Esophagus squamous epithelium (tissue), 5 donors: ENCODE measurements at regions of chr20 and their contacts with region 1.

Region 1: GRCh38 chr20:31951530-31952453 is at the start of gene PDRG1:
- DNase-seq: peak; percentile 80
- H3K4me3 ChIP-seq: peak within 1 kb of the TSS; percentile 75 to 98 (median 92)
- H3K27ac ChIP-seq: peak within 1 kb of the TSS; percentile 81 to 89 (median 84)
- H3K4me1 ChIP-seq: peaks cover 12 to 24% (median 13%) of the 10 kb centered on the region in 3 donors
- H3K27me3 ChIP-seq: peaks cover 0 to 18% (median 0%) of the 10 kb centered on the region in 4 donors
- CTCF ChIP-seq: peak; percentile 90 to 100 (median 96)
- POLR2A ChIP-seq: peak in 3 of 4 donors; percentile 48 to 63 (median 62)
- total RNA-seq, gene PDRG1: 6.6 to 14.8 (median 11.1) TPM

Region 2: DNA sequence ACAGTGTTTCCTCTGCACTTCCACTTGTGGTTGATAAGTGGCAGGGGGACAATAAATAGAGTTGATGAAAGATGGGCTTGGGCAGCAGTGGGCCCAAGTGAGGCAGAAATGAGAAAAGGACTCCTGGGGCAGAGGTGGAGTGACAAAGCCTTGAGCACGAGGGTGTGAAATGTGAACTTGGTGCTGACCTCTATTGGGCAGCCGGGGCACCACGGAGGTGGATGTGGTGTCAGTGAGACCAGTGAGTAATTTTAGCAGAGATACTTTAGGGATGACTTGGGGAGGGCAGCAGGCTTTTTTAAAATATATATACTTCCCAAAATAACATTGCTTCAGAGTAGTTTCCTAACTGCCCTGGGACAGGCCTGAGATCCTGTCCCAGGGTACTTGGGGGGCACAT is 163.2 kb before region 1 on chr20:
- intact Hi-C with region 1: no loop called
- DNase-seq: no peak
- H3K4me3 ChIP-seq: no peak overlapping the region
- H3K27ac ChIP-seq: no peak overlapping the region
- H3K4me1 ChIP-seq: no peaks in the 10 kb centered on the region
- H3K27me3 ChIP-seq: no peaks in the 10 kb centered on the region
- CTCF ChIP-seq: no peak
- POLR2A ChIP-seq: no peak

Region 3: DNA sequence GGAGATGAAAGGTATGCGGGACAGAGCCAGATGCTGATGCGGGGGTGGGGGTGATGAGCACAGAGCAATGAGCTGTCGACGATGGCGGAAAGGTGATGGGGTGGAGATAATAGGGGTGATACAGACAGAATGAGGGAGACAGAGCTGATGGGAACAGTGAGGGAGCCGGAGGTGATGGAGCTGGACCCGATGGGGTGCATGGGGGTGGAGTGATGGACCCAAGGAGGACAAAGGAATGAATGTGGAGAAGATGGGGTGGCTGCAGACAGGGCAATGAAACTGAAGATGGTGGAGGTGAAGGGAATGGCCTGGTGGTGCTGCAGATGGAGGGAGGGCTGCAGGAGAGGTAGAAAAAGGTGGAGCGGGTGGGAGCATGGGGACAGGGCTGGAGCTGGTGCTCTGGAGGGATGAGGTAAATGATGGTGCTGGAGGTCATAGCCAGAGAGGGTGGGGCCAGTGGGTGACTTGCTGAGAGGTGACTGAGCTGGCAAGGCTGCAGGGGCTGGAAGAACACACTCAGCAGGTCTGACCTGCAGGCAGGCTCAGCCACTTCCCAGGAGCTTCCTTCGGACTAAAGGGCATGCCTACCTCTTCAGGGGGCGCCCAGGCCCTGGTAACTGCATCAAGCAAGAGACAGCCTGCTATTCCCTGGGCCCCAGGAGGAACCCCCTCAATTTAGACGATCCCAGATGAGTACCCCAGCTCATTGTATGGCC is 100.4 kb before region 1 on chr20:
- intact Hi-C with region 1: loop called (anchors 5 kb)
- DNase-seq: no peak
- H3K4me3 ChIP-seq: no peak overlapping the region
- H3K27ac ChIP-seq: no peak overlapping the region
- H3K4me1 ChIP-seq: peaks cover 3 to 41% (median 5%) of the 10 kb centered on the region in 3 donors
- H3K27me3 ChIP-seq: peaks cover 0 to 77% (median 0%) of the 10 kb centered on the region in 4 donors
- CTCF ChIP-seq: no peak
- POLR2A ChIP-seq: no peak